ENCODE measurements at regions of chr15 and their contacts with region 1.

Region 1: DNA sequence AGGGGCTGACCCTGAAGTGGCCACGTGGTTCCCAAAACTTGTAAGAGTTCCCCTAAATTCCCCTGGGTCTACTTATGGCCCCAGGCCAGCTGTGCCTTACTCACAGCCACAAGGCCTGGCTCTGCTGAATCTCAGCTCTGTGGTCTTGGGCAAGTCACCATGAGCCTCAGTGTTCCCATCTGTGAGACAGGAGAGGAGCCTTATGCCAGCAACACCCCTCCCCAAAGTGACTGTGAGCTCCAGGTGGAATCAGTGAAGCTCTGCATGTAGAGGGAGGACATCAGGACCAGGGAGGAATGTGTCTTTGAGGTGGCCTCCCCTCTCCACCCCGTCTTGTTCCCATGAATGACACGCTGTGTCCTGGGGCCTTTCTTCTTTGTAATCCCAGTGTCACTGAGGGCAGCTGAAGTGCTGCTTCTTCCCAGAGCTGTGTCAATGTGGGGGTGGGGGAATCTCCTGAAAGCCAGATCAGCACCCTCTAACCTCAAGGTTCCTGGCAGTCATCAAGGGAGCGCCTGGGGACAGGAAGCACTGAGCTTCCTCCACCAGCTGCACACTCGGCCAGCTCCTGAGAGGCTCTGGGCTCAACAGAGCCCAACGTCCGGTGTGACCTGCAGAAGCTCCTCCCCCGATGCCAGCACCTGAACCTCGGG is 258.9 kb downstream of the UACA start:
- DNase-seq: no peak
- H3K4me3 Mint-ChIP-seq: peak overlapping the region; percentile 24
- H3K27ac Mint-ChIP-seq: peak overlapping the region; percentile 87
- H3K4me1 Mint-ChIP-seq: peaks cover 85% of the 10 kb centered on the region
- H3K27me3 Mint-ChIP-seq: no peaks in the 10 kb centered on the region
- CTCF ChIP-seq: no peak

Region 2: DNA sequence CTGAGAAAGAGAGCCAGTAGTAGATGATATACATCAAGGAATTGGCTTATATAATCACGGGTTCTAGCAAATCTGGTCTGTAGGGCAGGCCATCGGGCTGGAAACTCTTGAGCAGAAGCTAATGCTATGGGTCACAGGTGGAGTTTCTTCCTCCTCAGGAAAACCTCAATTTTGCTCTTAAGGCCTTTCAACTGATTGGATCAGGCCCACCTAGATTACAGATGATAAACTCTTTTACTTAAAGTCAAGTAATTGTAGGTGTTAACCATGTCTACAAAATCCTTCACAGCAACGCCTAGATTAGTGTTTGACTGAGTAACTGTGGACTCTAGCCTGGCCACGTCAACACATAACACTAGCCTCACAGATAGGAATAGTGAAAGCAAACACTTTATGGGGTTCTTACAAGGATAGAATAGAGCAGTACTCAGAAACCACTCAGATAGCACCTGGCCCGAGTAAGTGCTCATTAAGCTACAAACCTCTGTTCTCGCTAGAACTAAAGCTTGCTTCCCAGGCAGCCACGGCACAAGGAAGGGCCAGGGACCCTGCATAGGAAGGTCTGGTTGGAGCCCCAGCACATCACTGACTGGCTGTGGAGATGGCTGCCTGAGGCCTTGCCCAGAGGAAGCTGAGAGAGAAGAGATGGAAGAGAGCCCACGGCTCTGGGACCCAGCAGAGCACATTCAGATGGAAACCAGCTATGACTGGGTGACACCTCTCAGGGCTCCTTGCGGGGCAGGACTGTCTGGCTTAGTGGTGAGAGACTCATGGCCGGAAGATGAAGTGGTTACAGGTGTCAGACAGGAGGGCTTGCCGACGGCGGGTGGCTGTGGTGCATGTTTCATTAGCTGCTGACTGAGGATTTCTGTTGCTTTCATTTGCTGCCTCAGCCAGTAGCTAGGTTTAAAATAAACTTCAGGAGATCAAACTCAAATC is 204.2 kb before region 1 on chr15:
- CTCF ChIA-PET with region 1: no interaction called
- intact Hi-C with region 1: no loop called
- DNase-seq: no peak
- H3K4me3 Mint-ChIP-seq: no peak overlapping the region
- H3K27ac Mint-ChIP-seq: no peak overlapping the region
- H3K4me1 Mint-ChIP-seq: no peaks in the 10 kb centered on the region
- H3K27me3 Mint-ChIP-seq: no peaks in the 10 kb centered on the region
- CTCF ChIP-seq: no peak

Region 3: GRCh38 chr15:70466895-70467529 is 37.4 kb before region 1 on chr15:
- CTCF ChIA-PET with region 1: interaction called, 10 read pairs
- intact Hi-C with region 1: no loop called
- DNase-seq: peak; percentile 72
- H3K4me3 Mint-ChIP-seq: no peak overlapping the region
- H3K27ac Mint-ChIP-seq: no peak overlapping the region
- H3K4me1 Mint-ChIP-seq: peaks cover 10% of the 10 kb centered on the region
- H3K27me3 Mint-ChIP-seq: peaks cover 24% of the 10 kb centered on the region
- CTCF ChIP-seq: peak; percentile 81

Region 4: GRCh38 chr15:70474471-70475396 is 29.7 kb before region 1 on chr15:
- CTCF ChIA-PET with region 1: interaction called, 10 read pairs
- intact Hi-C with region 1: no loop called
- DNase-seq: peak; percentile 66
- H3K4me3 Mint-ChIP-seq: peak overlapping the region; percentile 50
- H3K27ac Mint-ChIP-seq: peak overlapping the region; percentile 75
- H3K4me1 Mint-ChIP-seq: peaks cover 29% of the 10 kb centered on the region
- H3K27me3 Mint-ChIP-seq: peaks cover 6% of the 10 kb centered on the region
- CTCF ChIP-seq: no peak

Region 5: DNA sequence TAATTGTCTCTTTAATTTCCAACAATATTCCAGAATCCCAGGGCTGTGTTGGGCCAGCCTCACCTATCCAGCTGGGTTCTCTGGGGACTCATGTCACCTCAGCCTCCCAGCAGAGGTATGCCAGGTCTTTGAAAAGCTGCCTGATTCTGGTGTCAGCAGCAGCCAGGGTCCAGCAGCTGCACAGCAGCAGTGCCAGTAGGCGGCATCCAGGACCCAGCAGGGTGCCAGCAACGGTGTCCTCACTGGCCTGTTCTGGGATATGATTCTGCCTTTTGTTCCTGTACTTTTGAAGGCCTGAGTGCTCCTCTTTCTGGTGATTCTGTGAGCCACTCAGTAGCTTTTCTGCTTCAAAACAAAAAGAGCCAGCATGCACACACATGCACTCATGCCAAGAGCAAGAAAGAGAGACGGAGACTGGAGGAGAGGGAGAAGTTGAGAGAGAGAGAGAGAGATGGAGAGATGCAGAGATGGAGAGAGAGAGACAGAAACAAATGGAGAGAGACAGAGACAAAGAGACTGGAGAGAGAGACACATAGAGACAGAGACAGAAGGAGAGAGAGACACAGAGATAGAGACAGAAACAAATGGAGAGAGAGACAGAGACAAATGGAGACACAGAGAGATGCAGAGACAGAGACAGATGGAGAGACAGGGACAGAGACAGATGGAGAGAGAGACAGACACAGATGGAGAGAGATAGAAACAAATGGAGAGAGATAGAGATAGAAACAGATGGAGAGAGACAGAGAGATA is 53.3 kb after region 1 on chr15:
- CTCF ChIA-PET with region 1: no interaction called
- intact Hi-C with region 1: no loop called
- DNase-seq: no peak
- H3K4me3 Mint-ChIP-seq: no peak overlapping the region
- H3K27ac Mint-ChIP-seq: no peak overlapping the region
- H3K4me1 Mint-ChIP-seq: no peaks in the 10 kb centered on the region
- H3K27me3 Mint-ChIP-seq: no peaks in the 10 kb centered on the region
- CTCF ChIP-seq: no peak

Region 6: DNA sequence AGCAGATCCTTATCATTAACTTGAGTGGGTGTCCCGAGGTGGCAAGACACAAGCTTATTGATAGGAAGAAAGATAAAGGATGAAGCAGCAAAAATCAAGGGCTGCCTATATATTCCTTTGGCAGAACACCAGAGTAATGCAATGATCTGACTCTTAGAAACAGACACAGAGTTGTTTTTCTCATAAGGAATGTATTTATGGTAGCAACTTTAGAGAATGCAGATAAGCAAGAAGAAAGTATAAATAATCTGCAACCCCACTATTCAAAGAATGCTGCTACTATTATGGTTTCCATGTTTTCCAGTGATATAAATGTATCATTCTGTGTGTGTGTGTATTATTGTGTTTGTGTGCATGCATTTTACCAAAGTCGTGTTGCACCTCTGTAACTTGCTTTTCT is 819.2 kb after region 1 on chr15:
- CTCF ChIA-PET with region 1: no interaction called
- intact Hi-C with region 1: no loop called
- DNase-seq: no peak
- H3K4me3 Mint-ChIP-seq: no peak overlapping the region
- H3K27ac Mint-ChIP-seq: no peak overlapping the region
- H3K4me1 Mint-ChIP-seq: peaks cover 11% of the 10 kb centered on the region
- H3K27me3 Mint-ChIP-seq: no peaks in the 10 kb centered on the region
- CTCF ChIP-seq: no peak